Body of pancreas (tissue), 4 donors: ENCODE measurements at regions of chr16 and their contacts with region 1.

Region 1: GRCh38 chr16:1193143-1193824 is 31.8 kb downstream of the TPSG1 start:
- DNase-seq: peak in 3 of 4 donors; percentile 19 to 29 (median 24)
- ATAC-seq: no peak
- H3K4me3 ChIP-seq: no peak overlapping the region
- H3K27ac ChIP-seq: no peak overlapping the region
- H3K4me1 ChIP-seq: peaks cover 6% of the 10 kb centered on the region
- H3K27me3 ChIP-seq: no peaks in the 10 kb centered on the region
- CTCF ChIP-seq: no peak
- POLR2A ChIP-seq: no peak

Region 2: DNA sequence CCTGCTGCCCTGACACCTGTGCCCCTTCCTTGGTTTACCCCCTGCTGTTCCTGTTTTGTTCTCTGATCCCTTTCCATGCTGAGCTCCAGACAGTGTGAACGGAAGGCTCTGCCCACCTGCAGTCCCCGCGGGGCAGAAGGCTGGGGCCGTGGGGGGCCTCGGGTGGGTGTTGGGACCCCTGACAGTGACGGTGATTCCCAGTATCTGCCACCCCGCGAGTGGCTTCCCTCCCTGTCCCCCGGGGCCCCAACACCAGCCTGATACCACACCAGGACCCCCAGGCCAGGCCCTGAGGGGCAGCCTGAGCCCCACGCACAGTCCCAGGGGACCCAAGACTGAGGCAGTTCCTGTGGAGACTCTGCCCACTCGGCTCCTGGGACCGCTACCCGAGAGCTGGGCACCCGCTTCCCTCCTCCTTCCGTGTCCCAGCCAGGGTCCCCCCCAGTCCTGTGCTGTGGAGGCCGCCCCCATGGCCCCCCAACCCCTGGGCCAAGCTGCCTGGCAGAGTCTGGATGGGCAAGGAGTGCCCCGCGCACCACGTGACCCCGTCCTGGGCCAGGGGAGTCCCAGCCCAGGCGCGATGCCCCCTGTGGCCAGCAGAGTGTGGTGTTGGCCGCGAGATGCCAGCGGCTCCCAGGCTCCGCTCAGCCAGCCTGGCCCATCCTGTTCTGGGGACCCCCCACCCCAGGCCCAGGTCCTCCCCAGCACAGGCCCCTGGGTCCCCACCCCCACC is 87.2 kb before region 1 on chr16:
- intact Hi-C with region 1: loop called (anchors 2 kb)
- DNase-seq: peak; percentile 75 to 84 (median 79)
- ATAC-seq: peak; percentile 79
- H3K4me3 ChIP-seq: no peak overlapping the region
- H3K27ac ChIP-seq: no peak overlapping the region
- H3K4me1 ChIP-seq: peaks cover 18% of the 10 kb centered on the region
- H3K27me3 ChIP-seq: peaks cover 0 to 45% of the 10 kb centered on the region in 2 donors
- CTCF ChIP-seq: peak; percentile 86 to 96 (median 91)
- POLR2A ChIP-seq: no peak